CD4-positive, alpha-beta T cell (primary cell): ENCODE measurements at regions of chr19 and their contacts with region 1.

Region 1: GRCh38 chr19:1513499-1514294 is 878 bp upstream of the ADAMTSL5 start:
- DNase-seq: peak; percentile 53 to 83 (median 64)
- ATAC-seq: peak; percentile 70
- H3K4me3 ChIP-seq: peak overlapping the region; percentile 25
- H3K4me3 Mint-ChIP-seq: peak overlapping the region; percentile 34
- H3K27ac ChIP-seq: no peak overlapping the region
- H3K27ac Mint-ChIP-seq: no peak overlapping the region
- H3K4me1 ChIP-seq: peaks cover 26% of the 10 kb centered on the region
- H3K4me1 Mint-ChIP-seq: peaks cover 13% of the 10 kb centered on the region
- H3K27me3 ChIP-seq: no peaks in the 10 kb centered on the region
- H3K27me3 Mint-ChIP-seq: peaks cover 13% of the 10 kb centered on the region
- CTCF ChIP-seq: peak; percentile 63

Region 2: GRCh38 chr19:1438035-1438932 is 75.4 kb before region 1 on chr19 and contains the start of gene RPS15:
- CTCF ChIA-PET with region 1: no interaction called
- POLR2A ChIA-PET with region 1: no interaction called
- intact Hi-C with region 1: loop called (anchors 2 to 5 kb)
- DNase-seq: peak; percentile 93 to 99 (median 96)
- ATAC-seq: peak; percentile 88
- H3K4me3 ChIP-seq: peak within 1 kb of the TSS; percentile 96
- H3K4me3 Mint-ChIP-seq: peak within 1 kb of the TSS; percentile 100
- H3K27ac ChIP-seq: peak within 1 kb of the TSS; percentile 83 to 90
- H3K27ac Mint-ChIP-seq: peak within 1 kb of the TSS; percentile 92
- H3K4me1 ChIP-seq: peaks cover 32% of the 10 kb centered on the region
- H3K4me1 Mint-ChIP-seq: peaks cover 25% of the 10 kb centered on the region
- H3K27me3 ChIP-seq: no peaks in the 10 kb centered on the region
- H3K27me3 Mint-ChIP-seq: no peaks in the 10 kb centered on the region
- CTCF ChIP-seq: peak; percentile 97
- total RNA-seq, gene RPS15: 2,193 to 2,200 TPM

Region 3: GRCh38 chr19:1445185-1445931 is 68.3 kb before region 1 on chr19:
- CTCF ChIA-PET with region 1: no interaction called
- POLR2A ChIA-PET with region 1: no interaction called
- intact Hi-C with region 1: loop called in 1 of 2 experiments (anchors 2 kb)
- DNase-seq: peak; percentile 55 to 88 (median 72)
- ATAC-seq: peak; percentile 86
- H3K4me3 ChIP-seq: peak overlapping the region; percentile 52
- H3K4me3 Mint-ChIP-seq: peak overlapping the region; percentile 69
- H3K27ac ChIP-seq: no peak overlapping the region
- H3K27ac Mint-ChIP-seq: no peak overlapping the region
- H3K4me1 ChIP-seq: peaks cover 50% of the 10 kb centered on the region
- H3K4me1 Mint-ChIP-seq: peaks cover 22% of the 10 kb centered on the region
- H3K27me3 ChIP-seq: peaks cover 33 to 44% of the 10 kb centered on the region in 2 experiments
- H3K27me3 Mint-ChIP-seq: peaks cover 27% of the 10 kb centered on the region
- CTCF ChIP-seq: peak; percentile 87

Region 4: GRCh38 chr19:1652471-1653299 is 139.0 kb after region 1 on chr19 and contains the start of gene TCF3:
- CTCF ChIA-PET with region 1: no interaction called
- POLR2A ChIA-PET with region 1: no interaction called
- intact Hi-C with region 1: no loop called
- DNase-seq: peak; percentile 97 to 99 (median 99)
- ATAC-seq: peak; percentile 90
- H3K4me3 ChIP-seq: peak within 1 kb of the TSS; percentile 63
- H3K4me3 Mint-ChIP-seq: peak within 1 kb of the TSS; percentile 97
- H3K27ac ChIP-seq: peak within 1 kb of the TSS; percentile 99
- H3K27ac Mint-ChIP-seq: peak within 1 kb of the TSS; percentile 98
- H3K4me1 ChIP-seq: peaks cover 26% of the 10 kb centered on the region
- H3K4me1 Mint-ChIP-seq: peaks cover 14% of the 10 kb centered on the region
- H3K27me3 ChIP-seq: no peaks in the 10 kb centered on the region
- H3K27me3 Mint-ChIP-seq: peaks cover 10% of the 10 kb centered on the region
- CTCF ChIP-seq: no peak
- total RNA-seq, gene TCF3: 51.2 to 52.2 TPM